GM10248 (cell line): ENCODE measurements at regions of chr20 and their contacts with region 1.

Region 1: GRCh38 chr20:16846006-16846405 is 97.8 kb downstream of the OTOR start:
- DNase-seq: no peak
- CTCF ChIP-seq: no peak

Region 2: DNA sequence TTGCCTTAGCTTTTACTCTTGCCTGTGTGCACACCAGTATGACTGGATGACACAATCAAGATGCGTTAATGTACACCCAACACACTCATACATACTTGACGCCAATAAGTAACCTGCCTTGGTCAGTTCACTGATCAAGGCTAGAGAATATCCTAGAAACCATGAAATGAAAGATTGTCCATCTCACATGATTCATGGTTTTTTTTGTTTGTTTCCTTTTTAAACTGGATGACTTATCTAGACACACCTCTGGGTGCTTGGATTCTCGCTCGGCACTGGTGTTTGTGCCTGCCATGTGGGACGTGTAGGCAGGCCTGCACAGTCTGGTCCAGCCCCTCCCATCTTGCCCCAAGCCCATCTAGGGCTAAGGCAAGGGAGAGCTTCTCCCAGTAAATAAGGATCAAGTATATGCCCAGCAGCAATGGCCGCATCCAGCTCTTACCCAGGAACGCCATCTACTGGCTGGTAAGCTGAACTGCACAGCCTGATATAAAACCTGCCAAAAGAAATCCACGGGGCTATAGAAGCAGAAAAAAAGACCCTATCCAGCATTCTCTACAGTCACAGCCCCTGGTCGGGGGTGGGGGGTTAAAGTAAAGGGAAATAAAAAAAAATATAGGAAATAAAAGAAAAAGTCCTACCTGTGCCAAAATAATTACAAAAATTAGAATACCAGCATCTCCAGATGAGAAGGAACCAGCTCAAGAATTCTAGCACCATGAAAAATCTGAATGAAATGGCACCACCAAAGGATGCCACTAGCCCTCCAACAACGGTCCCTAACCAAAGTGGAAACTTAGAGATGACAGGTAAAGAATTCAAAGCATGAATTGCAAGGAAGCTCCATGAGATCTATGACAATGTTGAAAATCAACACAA is 24.6 kb before region 1 on chr20:
- CTCF ChIA-PET with region 1: interaction called, 10 read pairs
- POLR2A ChIA-PET with region 1: no interaction called
- DNase-seq: peak; percentile 38
- CTCF ChIP-seq: peak; percentile 81

Region 3: DNA sequence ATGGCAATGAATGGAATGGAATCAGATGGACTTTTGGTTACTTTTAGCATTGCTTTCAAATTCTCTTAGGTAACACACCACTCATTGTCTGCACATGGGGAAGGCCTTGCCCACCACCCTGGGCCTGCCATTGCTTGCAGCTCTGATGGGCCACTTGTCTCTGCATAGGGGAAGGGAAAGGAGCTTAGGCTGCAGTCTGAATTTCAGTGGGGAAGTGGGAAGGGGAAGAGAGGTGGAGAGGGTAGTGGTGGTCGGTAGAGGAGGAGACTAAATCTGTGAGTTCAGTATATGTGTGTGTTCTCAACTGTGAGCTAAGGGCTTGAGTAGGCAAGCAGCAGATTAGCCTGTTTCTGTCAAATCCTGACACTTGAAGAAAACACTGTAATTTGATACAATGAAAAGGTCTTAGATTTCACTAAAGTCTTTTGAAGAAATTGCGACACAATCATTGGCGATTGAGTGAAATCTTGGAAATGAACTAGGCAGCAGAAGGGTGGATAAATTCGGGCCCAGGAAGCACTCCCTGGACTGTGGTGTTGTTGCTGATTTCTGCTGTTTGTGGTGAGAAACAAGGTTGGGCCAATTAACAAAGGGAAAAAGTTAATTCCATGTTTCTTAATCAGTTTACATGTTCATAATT is 17.2 kb before region 1 on chr20:
- CTCF ChIA-PET with region 1: interaction called, 3 read pairs
- POLR2A ChIA-PET with region 1: interaction called, 10 read pairs
- DNase-seq: no peak
- CTCF ChIP-seq: no peak